Heart right ventricle (tissue), 16 donors: ENCODE measurements at regions of chr11 and their contacts with region 1.

Region 1: DNA sequence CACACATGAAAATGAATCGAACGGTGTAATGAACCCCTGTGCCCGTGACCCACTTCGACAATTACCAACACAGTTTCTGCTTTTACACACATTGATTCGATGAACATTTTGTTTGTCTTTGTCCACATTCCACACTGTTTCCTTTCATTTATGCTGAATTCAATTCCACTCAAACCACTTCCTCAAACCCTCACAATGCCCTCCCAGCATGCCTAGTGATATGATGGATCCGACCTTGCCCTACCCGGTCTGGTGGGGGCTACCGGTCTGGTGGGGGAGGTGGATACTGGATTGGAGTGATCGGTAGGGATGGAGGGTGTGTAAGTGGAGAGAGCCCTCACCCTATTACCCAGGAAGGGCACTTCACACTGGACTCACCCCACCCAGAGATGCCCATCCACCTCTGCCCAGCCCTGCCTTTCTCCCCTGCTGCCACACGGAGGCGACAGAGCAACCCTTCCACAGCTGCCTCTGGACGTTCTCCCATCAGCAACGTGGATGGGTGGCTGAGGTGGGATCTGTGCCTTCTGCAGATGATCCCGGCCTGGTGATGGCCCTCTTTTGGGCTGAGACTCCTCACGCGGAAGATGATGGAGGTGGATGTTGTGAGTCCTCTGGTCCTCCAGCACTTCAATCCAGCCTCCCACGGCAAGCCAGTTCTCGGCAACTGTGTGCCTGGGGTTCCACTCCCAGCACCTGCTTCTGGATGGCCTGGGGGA is 33.0 kb upstream of the P2RY2 start:
- DNase-seq: peak; percentile 71 to 75
- ATAC-seq: peak in 7 of 8 donors; percentile 33 to 77 (median 57)
- H3K4me3 ChIP-seq: peak overlapping the region in 1 of 10 donors; percentile 24
- H3K27ac ChIP-seq: peak overlapping the region in 3 of 10 donors; percentile 0 to 36 (median 6)
- H3K4me1 ChIP-seq: peaks cover 10 to 53% (median 32%) of the 10 kb centered on the region in 9 donors
- H3K27me3 ChIP-seq: no peaks in the 10 kb centered on the region
- CTCF ChIP-seq: peak; percentile 71 to 90 (median 85)

Region 2: DNA sequence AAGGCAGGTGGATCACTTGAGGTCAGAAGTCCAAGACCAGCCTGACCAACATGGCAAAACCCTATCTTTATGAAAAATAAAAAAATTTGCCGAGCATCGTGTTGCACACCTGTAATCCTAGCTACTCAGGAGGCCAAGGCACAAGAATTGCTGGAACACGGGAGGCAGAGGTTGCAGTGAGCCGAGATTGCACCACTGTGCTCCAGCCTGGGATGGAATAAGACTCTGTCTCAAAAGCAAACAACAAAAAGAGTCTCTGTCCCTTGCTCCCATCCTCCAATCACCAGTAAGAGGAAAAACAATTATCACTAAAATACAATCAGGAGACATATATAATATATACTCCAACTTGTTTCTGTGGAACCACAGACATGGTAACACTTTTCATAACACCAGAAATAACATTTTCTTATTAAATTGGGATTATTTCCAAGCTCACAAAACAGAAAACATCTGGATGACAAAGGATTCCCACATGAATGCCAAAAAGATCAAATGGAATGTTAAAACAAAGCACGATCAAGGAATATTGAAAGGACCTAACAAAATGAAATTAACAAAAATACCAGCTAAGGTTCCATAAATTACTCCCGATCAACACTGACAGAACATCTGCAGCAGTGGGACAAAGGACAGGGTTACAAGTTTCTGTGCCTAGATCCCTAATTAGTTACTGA is 58.2 kb before region 1 on chr11:
- intact Hi-C with region 1: no loop called
- DNase-seq: no peak
- ATAC-seq: peak in 1 of 8 donors; percentile 27
- H3K4me3 ChIP-seq: no peak overlapping the region
- H3K27ac ChIP-seq: peak overlapping the region in 2 of 10 donors; percentile 46 to 55
- H3K4me1 ChIP-seq: peaks cover 0 to 31% (median 19%) of the 10 kb centered on the region in 9 donors
- H3K27me3 ChIP-seq: no peaks in the 10 kb centered on the region
- CTCF ChIP-seq: no peak

Region 3: DNA sequence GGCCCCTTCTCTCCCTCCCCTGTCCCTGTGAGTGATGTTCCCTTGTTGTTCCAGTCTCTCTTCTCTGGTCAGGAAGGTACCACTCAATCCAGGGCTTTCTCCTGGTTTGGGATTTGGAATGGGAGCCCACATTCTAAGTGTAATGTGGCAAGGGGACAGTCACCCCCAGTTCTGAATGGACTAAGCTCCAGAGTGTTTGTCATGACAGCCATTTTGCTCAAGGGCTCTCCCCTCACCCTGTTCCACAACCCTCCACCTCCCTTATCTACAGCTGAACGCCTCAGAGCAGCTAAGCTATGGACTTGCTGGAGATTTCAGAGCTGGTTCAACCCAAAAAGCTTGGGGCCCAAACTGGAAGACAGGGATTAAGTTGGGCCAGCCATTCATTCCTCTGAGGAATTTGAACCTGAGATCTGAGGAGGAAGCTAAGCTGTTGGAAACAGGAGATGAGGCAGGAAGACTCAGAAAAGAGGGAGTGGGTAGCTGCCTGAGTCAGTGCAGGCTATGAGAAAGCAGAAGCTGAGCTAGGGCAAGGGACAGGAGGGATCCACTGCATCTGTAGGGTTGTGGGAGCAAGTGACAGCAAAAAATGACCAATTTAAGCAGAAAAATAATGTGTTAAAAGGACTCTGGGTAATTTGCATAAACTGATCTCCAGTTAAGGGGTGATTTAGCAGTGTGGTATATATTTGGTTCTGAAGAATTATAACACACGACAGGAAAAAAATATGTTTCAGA is 20.1 kb before region 1 on chr11:
- intact Hi-C with region 1: no loop called
- DNase-seq: no peak
- ATAC-seq: no peak
- H3K4me3 ChIP-seq: no peak overlapping the region
- H3K27ac ChIP-seq: peak overlapping the region in 1 of 10 donors; percentile 13
- H3K4me1 ChIP-seq: peaks cover 0 to 56% (median 37%) of the 10 kb centered on the region in 9 donors
- H3K27me3 ChIP-seq: no peaks in the 10 kb centered on the region
- CTCF ChIP-seq: no peak

Region 4: DNA sequence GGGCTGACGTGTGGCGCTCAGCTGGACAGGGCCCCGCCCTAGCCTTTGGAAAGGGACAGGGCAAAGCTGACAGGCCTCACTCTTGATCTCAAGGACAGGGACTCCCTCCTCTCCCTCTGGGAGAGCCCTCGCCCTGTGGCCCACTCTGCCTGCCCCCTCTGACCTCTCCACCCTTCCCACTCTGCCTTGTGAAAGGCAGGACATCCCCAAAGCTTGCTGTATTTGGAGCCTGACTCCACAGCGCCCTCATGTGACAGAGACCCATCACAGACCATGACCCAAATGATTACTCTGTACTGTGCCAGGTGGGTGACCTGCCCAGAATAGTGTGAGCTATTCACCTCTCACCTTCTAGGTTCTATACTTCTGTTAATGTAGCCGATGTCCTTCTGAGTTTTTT is 51.7 kb after region 1 on chr11:
- intact Hi-C with region 1: loop called (anchors 1 to 5 kb)
- DNase-seq: peak; percentile 54 to 69
- ATAC-seq: peak in 6 of 8 donors; percentile 7 to 52 (median 36)
- H3K4me3 ChIP-seq: no peak overlapping the region
- H3K27ac ChIP-seq: peak overlapping the region in 9 of 10 donors; percentile 57 to 90 (median 80)
- H3K4me1 ChIP-seq: peaks cover 25 to 84% (median 72%) of the 10 kb centered on the region in 9 donors
- H3K27me3 ChIP-seq: no peaks in the 10 kb centered on the region
- CTCF ChIP-seq: peak; percentile 34 to 75 (median 66)

Region 5: DNA sequence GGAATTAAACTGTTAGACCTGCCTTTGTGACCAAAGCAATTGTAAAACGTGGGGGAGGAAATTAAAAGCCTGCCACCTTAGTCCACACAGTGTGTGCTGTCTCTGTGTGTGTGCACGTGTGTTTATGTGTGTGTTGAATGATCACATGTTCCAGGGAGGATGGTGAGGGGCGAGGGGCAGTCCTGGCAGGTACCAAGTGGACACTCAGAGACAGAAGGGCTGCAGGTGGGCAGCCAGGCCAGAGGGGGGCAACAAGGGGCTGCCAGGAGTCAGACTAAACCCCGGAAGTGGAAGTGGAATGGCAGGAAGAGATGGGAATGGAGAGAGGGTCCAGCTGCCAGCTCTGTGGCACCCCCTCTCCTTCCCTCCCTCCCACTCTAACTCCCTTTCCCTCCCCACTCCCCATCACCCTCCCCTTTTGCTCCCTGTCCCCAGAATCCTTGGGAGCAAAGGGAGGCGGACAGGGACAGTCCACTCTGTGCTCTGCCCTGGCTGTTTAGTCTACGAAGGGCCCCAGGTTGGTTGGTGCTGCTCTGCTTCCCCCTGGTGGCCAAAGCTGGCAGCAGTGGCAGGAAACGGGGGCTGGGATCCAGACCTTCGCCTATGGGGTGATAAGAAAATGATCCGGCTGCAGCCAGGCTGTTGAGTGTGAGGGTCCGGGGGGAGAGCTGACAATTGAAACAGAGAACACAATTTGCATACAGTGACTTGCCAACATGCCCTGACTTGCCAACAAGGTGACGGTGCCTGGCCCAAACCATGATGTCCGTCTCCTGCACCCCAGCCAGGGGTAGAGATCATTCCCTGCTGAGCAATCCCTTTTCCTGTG is 57.4 kb after region 1 on chr11:
- intact Hi-C with region 1: loop called (anchors 1 to 5 kb)
- DNase-seq: peak; percentile 61 to 82
- ATAC-seq: peak; percentile 28 to 68 (median 56)
- H3K4me3 ChIP-seq: peak overlapping the region in 5 of 10 donors; percentile 16 to 45 (median 29)
- H3K27ac ChIP-seq: peak overlapping the region in 5 of 10 donors; percentile 45 to 86 (median 76)
- H3K4me1 ChIP-seq: peaks cover 23 to 56% (median 54%) of the 10 kb centered on the region in 9 donors
- H3K27me3 ChIP-seq: no peaks in the 10 kb centered on the region
- CTCF ChIP-seq: peak; percentile 73 to 98 (median 89)

Region 6: DNA sequence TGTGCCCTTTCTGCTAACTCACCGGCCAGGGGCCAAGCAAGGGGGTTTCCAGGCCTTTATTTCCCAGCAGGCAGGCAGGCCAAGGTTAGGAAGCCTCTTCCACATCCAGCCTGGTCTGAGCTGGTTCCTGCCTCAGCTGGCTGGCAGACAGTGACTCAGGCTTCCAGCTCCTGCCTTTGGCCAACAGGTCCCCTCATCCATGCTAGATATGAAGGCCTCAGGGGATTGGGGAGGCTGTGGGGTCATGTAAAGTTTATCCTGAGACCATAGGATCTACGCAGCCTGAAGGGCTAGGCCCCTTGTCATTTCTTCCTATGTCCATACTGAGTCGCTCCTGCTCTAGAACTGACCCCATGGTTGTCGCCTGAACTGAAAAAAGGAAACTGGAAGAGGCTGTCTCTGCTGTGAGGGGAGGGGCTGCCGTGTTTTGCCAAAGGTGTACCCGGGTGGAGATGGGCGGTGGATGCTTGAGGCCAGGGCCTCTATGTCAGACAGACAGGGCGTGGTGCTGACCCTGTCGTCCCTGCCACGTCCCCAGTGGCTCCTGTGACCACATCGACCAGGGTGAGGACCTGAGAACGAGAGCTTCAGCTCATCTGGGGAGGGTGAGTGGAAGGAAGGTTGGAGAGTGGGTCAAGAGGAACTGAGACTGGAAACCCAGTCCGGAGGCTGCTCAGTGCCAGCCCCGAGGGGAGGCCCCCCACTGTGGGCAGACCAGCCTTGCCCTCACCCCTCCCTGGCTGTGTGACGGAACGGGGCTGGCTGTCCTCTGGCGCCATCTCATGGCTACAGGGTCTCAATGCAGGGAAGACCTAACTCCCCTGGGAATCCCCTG is 104.0 kb after region 1 on chr11:
- intact Hi-C with region 1: loop called (anchors 1 to 10 kb)
- DNase-seq: peak; percentile 70 to 72
- ATAC-seq: peak; percentile 79 to 89 (median 82)
- H3K4me3 ChIP-seq: peak overlapping the region in 8 of 10 donors; percentile 16 to 47 (median 37)
- H3K27ac ChIP-seq: peak overlapping the region; percentile 5 to 91 (median 60)
- H3K4me1 ChIP-seq: peaks cover 12 to 59% (median 31%) of the 10 kb centered on the region in 9 donors
- H3K27me3 ChIP-seq: no peaks in the 10 kb centered on the region
- CTCF ChIP-seq: peak; percentile 92 to 99 (median 96)

Region 7: DNA sequence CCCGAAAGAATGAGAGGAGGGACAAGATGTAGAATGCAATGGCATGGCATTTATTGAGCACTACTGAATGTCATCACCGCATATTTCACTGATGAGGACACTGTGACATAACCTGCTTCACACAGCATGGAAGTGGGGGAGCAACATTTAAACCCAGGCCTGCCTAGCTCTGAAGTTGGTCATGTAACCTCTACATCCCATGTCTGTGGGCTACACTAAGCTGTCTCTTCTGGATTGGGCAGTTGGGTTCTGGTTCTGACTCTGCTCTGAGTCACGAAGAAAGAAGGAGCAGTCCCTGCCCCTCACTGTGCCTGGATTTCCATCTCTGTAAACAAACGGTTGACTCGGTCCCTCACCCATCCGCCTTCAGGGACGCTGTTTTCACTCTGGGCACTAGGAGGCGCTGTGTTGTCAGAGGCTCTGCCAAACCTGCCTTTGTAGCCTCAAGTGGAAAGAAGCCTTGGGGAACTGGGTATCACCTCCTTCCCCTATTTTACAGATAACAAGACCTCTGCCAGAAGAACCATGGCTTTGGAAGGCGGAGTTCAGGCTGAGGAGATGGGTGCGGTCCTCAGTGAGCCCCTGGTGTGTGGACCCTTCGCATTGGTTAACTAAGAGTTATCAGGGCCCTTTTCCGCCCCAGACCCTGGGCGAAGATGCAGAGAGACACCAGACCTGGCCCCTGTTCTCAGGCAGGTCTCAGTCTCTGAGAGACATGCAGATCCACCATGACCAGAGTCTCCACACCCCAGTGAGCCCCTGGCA is 110.3 kb after region 1 on chr11:
- intact Hi-C with region 1: loop called in 1 of 10 experiments (anchors 10 kb)
- DNase-seq: peak; percentile 67 to 73
- ATAC-seq: peak in 7 of 8 donors; percentile 18 to 56 (median 46)
- H3K4me3 ChIP-seq: no peak overlapping the region
- H3K27ac ChIP-seq: no peak overlapping the region
- H3K4me1 ChIP-seq: peaks cover 0 to 19% (median 7%) of the 10 kb centered on the region in 9 donors
- H3K27me3 ChIP-seq: no peaks in the 10 kb centered on the region
- CTCF ChIP-seq: peak; percentile 58 to 95 (median 89)